ENCODE measurements at regions of chr12 and their contacts with region 1.

Region 1: DNA sequence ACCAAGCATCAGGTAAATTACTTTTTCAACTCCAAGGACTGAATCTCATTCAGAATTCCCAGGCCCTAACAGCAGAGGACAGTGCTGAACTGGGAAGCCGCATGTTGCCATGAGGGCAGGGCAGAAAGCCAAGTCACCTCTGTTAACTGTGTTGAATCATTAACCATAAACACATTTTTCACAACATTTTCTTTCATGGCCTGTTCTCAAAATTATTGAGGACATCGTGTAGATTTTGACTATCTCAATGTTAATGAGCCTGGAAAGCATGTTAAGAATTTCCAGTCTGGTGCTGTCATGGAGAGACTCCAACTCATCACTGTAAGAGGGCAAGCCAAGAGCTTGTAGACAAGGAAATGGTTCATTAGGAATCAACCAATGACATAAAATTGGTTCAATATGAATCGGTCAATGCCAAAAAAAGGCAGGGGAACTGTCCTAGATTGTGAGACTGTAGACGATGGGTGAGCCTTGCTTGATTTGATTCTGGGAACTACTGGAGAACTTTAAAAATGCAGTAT is 33.7 kb downstream of the CPM start:
- DNase-seq: peak; percentile 97
- H3K4me3 ChIP-seq: no peak overlapping the region
- H3K27ac ChIP-seq: peak overlapping the region; percentile 48
- H3K4me1 ChIP-seq: peaks cover 32% of the 10 kb centered on the region
- H3K27me3 ChIP-seq: no peaks in the 10 kb centered on the region

Region 2: DNA sequence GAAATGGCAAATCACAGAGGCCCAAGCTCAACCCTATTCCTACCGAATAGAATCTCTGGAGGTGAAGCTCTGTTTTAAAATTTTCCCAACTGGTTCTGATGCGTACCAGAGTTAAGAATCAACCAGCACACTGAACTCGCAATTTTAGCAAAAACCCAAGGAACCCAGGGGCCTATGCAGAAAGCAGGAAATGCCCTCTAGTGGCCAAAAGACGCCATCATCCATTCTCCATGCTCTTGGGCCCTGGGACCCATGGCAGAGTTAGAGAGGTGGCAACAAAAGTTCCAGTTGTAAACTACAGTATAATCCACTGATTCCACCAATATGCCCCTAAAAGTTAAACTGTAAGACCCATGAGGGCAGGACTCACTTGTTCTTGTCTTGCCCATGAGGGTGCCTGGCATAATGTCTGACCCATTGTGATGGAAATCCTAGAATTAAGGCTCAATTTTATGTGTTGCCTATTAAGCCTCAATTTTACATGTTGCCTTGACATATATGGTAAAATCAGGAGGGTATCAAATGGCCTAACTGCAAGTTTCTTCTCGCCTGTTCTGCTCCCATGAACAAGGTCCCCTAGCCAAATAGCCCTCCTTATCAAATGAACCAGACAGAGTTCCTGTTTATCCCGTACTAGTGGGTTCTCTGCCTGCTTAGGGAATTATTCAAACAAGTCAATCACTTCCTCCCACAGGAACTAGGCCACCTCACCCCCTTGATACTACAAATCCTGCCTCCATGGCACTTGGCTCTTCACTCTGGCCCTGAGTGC is 171.2 kb after region 1 on chr12:
- in situ Hi-C with region 1: loop called (anchors 10 kb)
- DNase-seq: peak; percentile 82
- H3K4me3 ChIP-seq: no peak overlapping the region
- H3K27ac ChIP-seq: no peak overlapping the region
- H3K4me1 ChIP-seq: peaks cover 11% of the 10 kb centered on the region
- H3K27me3 ChIP-seq: no peaks in the 10 kb centered on the region

Region 3: DNA sequence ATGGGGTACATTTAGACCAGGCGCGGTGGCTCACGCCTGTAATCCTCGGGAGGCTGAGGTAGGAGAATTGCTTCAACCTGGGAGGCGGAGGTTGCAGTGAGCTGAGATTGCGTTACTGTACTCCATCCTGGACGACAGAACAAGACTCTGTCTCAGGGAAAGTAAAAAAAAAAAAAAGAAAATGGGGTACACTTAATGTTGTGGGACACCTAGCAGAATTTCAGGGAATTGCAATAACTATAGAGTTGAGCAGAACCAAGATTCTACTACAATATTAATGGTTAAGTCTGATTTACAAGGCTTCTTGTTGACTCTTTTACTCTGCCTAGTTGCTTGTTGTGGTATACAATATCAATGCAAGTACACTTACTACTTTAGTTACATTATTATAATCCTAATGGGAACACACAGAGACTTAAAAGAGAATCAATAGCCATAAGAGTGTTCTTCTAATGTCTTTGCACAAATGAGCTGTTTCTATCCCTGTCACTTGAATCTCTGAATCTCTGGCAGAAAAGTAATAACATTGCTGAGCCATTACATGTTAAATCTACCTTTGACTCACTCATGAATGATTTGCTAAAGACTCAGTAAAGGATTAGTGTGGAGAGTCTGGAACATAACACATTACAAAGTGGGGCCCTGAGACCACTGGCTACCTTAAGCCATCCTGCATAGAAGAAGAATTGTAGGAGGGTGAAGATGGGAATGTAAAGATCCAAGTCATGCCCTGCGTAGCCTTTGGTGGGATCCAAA is 777.1 kb after region 1 on chr12:
- in situ Hi-C with region 1: no loop called
- DNase-seq: peak; percentile 14
- H3K4me3 ChIP-seq: no peak overlapping the region
- H3K27ac ChIP-seq: no peak overlapping the region
- H3K4me1 ChIP-seq: no peaks in the 10 kb centered on the region
- H3K27me3 ChIP-seq: no peaks in the 10 kb centered on the region

Measured in GM23248 (cell line).